Panc1 (cell line): ENCODE measurements at regions of chr17 and their contacts with region 1.

Region 1: DNA sequence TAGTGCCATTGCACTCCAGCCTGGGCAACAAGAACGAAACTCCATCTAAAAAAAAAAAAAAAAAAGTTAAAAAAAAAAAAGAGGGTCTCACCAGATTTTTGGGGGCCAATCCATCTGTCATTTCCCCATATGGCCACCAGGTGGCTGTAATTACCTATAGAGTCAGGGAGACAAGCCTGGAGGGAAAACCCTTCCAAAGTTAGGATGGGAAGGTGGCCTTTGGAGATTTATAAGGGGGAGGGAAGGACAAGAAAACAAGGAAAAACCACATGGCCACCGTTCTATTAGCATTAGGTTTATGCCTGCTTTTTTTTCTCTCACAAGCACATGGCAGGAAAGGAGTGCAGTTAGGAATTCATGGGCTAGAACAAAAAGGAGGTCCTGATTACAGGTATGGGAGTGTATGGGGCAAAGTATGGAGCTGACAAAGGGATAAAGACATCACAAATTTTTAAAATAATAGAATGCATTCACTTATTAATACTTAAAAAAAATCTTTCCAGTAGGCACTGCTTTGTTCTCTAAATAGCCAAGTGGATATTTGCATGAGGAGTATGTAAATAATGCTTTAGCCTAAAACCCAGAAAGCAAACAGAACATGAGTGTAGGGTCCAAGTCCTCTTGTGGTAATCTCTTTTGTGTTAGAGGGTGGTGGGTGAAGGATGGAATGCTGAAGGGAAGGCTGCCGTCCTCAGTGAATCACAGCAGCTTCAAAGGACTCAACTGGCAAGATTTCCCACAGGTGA is 5.1 kb downstream of the CYB5D1 start:
- DNase-seq: no peak
- ATAC-seq: no peak
- H3K4me3 ChIP-seq: no peak overlapping the region
- H3K27ac ChIP-seq: no peak overlapping the region
- H3K4me1 ChIP-seq: peaks cover 7% of the 10 kb centered on the region; the same call in 1 of the 2 replicates
- H3K27me3 ChIP-seq: no peaks in the 10 kb centered on the region
- CTCF ChIP-seq: peak; percentile 86

Region 2: GRCh38 chr17:7885367-7886226 is 22.7 kb after region 1 on chr17:
- CTCF ChIA-PET with region 1: interaction called, 9 read pairs
- POLR2A ChIA-PET with region 1: interaction called, 10 read pairs
- in situ Hi-C with region 1: no loop called
- intact Hi-C with region 1: no loop called
- DNase-seq: no peak
- ATAC-seq: peak; percentile 33
- H3K4me3 ChIP-seq: peak overlapping the region; percentile 63 to 77
- H3K27ac ChIP-seq: peak overlapping the region; percentile 96
- H3K4me1 ChIP-seq: peaks cover 34% of the 10 kb centered on the region
- H3K27me3 ChIP-seq: no peaks in the 10 kb centered on the region
- CTCF ChIP-seq: no peak